ENCODE measurements at regions of chr21 and their contacts with region 1.

Region 1: GRCh38 chr21:14545906-14546480 is at the start of gene SAMSN1:
- DNase-seq: peak; percentile 41 to 87
- ATAC-seq: peak; percentile 88 to 94 (median 92)
- H3K4me3 ChIP-seq: peak within 1 kb of the TSS; percentile 63
- H3K4me3 Mint-ChIP-seq: peak within 1 kb of the TSS; percentile 87
- H3K27ac ChIP-seq: peak within 1 kb of the TSS; percentile 78
- H3K27ac Mint-ChIP-seq: peak within 1 kb of the TSS; percentile 85 to 96
- H3K4me1 ChIP-seq: peaks cover 15% of the 10 kb centered on the region
- H3K4me1 Mint-ChIP-seq: peaks cover 43 to 50% of the 10 kb centered on the region in 2 donors
- H3K27me3 ChIP-seq: no peaks in the 10 kb centered on the region
- H3K27me3 Mint-ChIP-seq: no peaks in the 10 kb centered on the region
- CTCF ChIP-seq: no peak
- total RNA-seq, gene SAMSN1: 17.7 to 101 (median 18.2) TPM

Region 2: GRCh38 chr21:14382835-14383594 is 163.0 kb before region 1 on chr21 and contains the start of gene HSPA13:
- intact Hi-C with region 1: loop called (anchors 5 kb)
- DNase-seq: peak; percentile 97 to 99
- ATAC-seq: peak; percentile 92 to 99 (median 94)
- H3K4me3 ChIP-seq: peak within 1 kb of the TSS; percentile 66
- H3K4me3 Mint-ChIP-seq: peak within 1 kb of the TSS; percentile 100
- H3K27ac ChIP-seq: peak within 1 kb of the TSS; percentile 91
- H3K27ac Mint-ChIP-seq: peak within 1 kb of the TSS; percentile 100
- H3K4me1 ChIP-seq: no peaks in the 10 kb centered on the region
- H3K4me1 Mint-ChIP-seq: peaks cover 25 to 26% of the 10 kb centered on the region in 2 donors
- H3K27me3 ChIP-seq: no peaks in the 10 kb centered on the region
- H3K27me3 Mint-ChIP-seq: no peaks in the 10 kb centered on the region
- CTCF ChIP-seq: no peak
- total RNA-seq, gene HSPA13: 17.0 to 23.8 (median 22.7) TPM

Region 3: GRCh38 chr21:14523234-14523633 is 22.8 kb before region 1 on chr21:
- intact Hi-C with region 1: loop called (anchors 1 kb)
- DNase-seq: peak; percentile 33 to 50
- ATAC-seq: peak; percentile 87 to 95 (median 89)
- H3K4me3 ChIP-seq: peak overlapping the region; percentile 12
- H3K4me3 Mint-ChIP-seq: peak overlapping the region; percentile 52
- H3K27ac ChIP-seq: peak overlapping the region; percentile 66
- H3K27ac Mint-ChIP-seq: peak overlapping the region; percentile 87 to 89
- H3K4me1 ChIP-seq: peaks cover 15% of the 10 kb centered on the region
- H3K4me1 Mint-ChIP-seq: peaks cover 28 to 41% of the 10 kb centered on the region in 2 donors
- H3K27me3 ChIP-seq: no peaks in the 10 kb centered on the region
- H3K27me3 Mint-ChIP-seq: no peaks in the 10 kb centered on the region
- CTCF ChIP-seq: no peak

Region 4: DNA sequence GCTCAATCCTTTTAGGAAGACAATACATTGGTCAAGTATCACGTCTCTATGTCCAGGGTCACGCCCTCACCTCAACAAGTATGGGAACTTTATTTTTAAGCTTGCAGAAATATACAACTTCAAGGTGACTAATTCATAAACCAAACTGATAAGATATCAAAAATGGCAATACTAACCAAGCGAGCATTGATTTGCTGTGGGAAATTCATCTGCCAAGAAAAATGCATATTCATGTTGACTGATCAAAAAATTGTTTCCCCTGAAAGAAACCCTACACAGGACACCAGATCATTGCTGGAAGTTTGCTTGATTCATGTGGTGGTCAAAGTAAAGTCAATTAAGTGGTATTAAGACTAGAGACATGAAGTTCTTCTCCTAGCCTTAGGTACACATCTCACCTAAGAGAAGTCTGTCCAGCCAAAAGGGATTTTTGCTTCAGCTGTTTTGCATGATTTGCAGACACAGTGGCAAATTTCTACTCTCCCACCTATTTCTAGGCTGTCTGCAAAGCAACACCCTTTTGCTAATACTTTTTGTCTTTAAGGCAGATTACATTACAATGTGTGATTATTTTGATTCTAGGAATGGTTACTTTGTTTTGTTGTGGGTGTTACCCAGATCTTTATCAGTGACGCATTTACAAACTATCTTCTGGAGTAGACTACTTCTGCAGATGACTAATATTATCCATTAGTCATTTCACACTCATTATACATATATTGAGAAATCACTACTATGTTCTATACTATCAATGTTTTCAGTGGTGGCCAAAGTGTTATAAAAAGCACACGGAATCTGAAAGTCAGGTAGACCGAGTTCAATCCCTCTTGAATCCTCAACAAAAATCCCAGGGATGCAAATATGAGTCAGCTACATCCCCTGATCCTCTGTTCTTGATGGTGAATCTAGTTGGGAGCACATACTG is 12.2 kb before region 1 on chr21:
- intact Hi-C with region 1: loop called (anchors 1 kb)
- DNase-seq: peak in 1 of 2 donors; percentile 84
- ATAC-seq: peak; percentile 83 to 87 (median 85)
- H3K4me3 ChIP-seq: peak overlapping the region; percentile 19
- H3K4me3 Mint-ChIP-seq: peak overlapping the region; percentile 82
- H3K27ac ChIP-seq: peak overlapping the region; percentile 93
- H3K27ac Mint-ChIP-seq: peak overlapping the region; percentile 93 to 95
- H3K4me1 ChIP-seq: peaks cover 8% of the 10 kb centered on the region
- H3K4me1 Mint-ChIP-seq: peaks cover 37 to 60% of the 10 kb centered on the region in 2 donors
- H3K27me3 ChIP-seq: no peaks in the 10 kb centered on the region
- H3K27me3 Mint-ChIP-seq: no peaks in the 10 kb centered on the region
- CTCF ChIP-seq: no peak

Region 5: DNA sequence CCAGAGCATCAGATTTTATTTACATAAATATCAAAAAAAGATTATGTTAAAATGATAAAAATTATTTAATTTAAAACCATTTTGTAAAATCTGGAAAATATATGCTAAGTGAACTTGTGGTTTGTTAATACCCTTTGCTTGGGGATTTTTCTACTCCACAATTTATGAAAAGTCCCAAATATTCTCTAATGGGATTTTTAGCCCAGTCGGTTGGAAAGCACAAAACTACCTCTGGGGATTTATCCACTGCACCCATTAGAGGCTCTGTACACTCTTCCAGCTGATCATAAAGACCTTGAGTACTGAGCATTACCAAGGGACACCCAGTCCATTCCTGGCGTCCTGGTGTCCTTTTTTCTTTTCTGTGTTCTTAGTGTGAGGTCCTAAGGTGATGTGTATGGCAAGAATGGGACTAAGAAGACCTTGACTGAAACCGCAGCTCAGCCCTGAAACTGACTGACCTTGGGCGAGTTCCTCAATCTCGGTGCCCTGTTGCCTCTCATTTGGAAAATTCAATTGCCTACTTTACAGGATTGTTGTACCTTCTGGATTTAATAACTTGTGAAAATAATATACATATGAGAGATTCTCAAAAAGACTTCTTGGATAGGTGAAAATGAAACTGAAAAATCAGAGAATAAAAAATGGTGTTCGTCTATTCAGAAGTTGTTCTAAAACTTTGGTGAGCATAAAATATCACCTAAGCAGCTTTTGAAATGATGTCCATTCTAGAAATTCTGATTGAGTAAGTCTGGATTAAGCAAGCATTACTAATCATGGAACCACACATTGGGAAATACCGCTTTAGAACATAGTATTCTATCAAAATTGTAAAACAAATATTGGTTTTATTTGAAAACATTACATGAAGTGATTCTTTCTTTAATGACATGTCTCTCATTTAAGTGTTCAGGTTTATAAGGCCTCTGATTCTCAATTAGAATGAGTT is 21.6 kb after region 1 on chr21:
- intact Hi-C with region 1: no loop called
- DNase-seq: no peak
- ATAC-seq: no peak
- H3K4me3 ChIP-seq: no peak overlapping the region
- H3K4me3 Mint-ChIP-seq: no peak overlapping the region
- H3K27ac ChIP-seq: no peak overlapping the region
- H3K27ac Mint-ChIP-seq: no peak overlapping the region
- H3K4me1 ChIP-seq: no peaks in the 10 kb centered on the region
- H3K4me1 Mint-ChIP-seq: no peaks in the 10 kb centered on the region
- H3K27me3 ChIP-seq: no peaks in the 10 kb centered on the region
- H3K27me3 Mint-ChIP-seq: no peaks in the 10 kb centered on the region
- CTCF ChIP-seq: no peak

Region 6: DNA sequence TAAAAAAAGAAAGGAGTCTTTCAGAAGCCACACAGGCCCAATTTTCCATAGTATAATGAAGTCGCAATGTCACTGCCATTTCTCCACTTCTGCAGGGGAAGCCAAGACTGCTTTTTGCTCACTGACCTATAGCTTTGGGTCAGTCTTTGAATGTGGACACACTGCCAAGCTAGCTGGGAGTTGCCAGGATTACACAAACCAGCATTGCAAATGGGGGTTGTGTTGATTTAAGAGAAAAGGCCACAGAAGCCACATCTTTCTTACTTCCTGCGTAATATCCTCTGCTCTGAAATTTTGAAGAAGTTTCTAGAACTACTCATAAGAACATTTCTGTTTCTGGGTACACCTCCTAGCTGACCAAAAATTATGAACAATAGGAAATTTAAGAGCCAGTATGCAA is 45.9 kb after region 1 on chr21:
- intact Hi-C with region 1: loop called (anchors 5 kb)
- DNase-seq: peak in 1 of 2 donors; percentile 44
- ATAC-seq: peak; percentile 73 to 90 (median 78)
- H3K4me3 ChIP-seq: no peak overlapping the region
- H3K4me3 Mint-ChIP-seq: no peak overlapping the region
- H3K27ac ChIP-seq: peak overlapping the region; percentile 55
- H3K27ac Mint-ChIP-seq: peak overlapping the region; percentile 13 to 55
- H3K4me1 ChIP-seq: peaks cover 7% of the 10 kb centered on the region
- H3K4me1 Mint-ChIP-seq: peaks cover 15 to 16% of the 10 kb centered on the region in 2 donors
- H3K27me3 ChIP-seq: no peaks in the 10 kb centered on the region
- H3K27me3 Mint-ChIP-seq: no peaks in the 10 kb centered on the region
- CTCF ChIP-seq: no peak

Measured in natural killer cell (primary cell).